Breast epithelium (tissue), 4 donors: ENCODE measurements at regions of chrX and their contacts with region 1.

Region 1: DNA sequence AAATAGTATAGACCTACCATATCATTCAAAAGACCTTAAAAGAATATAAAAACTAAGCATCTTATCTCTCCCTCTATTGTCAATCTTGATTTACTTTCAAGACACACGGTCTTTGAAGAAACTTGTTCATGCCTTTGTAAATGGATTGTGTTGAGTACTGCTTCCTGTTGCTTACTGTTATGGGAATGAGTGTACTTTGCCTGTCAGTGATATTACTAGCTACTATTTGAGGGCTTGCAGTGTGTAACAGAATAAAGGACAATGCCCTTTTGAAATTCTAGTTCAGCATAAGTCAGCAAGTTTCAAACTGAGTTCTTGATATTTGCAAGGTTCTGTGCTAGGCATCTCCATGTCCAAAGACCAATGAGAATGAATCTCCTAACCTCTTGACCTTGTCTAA is 36.0 kb downstream of the CDKL5 start:
- DNase-seq: no peak
- H3K4me3 ChIP-seq: no peak overlapping the region
- H3K27ac ChIP-seq: no peak overlapping the region
- H3K4me1 ChIP-seq: no peaks in the 10 kb centered on the region
- H3K27me3 ChIP-seq: peaks cover 0 to 2% of the 10 kb centered on the region in 2 donors
- CTCF ChIP-seq: no peak
- POLR2A ChIP-seq: no peak

Region 2: GRCh38 chrX:18436017-18436416 is 25.4 kb before region 1 on chrX:
- intact Hi-C with region 1: loop called (anchors 2 kb)
- DNase-seq: no peak
- H3K4me3 ChIP-seq: no peak overlapping the region
- H3K27ac ChIP-seq: no peak overlapping the region
- H3K4me1 ChIP-seq: no peaks in the 10 kb centered on the region
- H3K27me3 ChIP-seq: no peaks in the 10 kb centered on the region
- CTCF ChIP-seq: no peak
- POLR2A ChIP-seq: no peak